ENCODE measurements at regions of chr3 and their contacts with region 1.

Region 1: GRCh38 chr3:187319699-187320302 is 28.3 kb upstream of the MASP1 start:
- DNase-seq: peak; percentile 82
- H3K4me3 Mint-ChIP-seq: no peak overlapping the region
- H3K27ac Mint-ChIP-seq: no peak overlapping the region
- H3K4me1 Mint-ChIP-seq: peaks cover 7% of the 10 kb centered on the region
- H3K27me3 Mint-ChIP-seq: peaks cover 21% of the 10 kb centered on the region

Region 2: GRCh38 chr3:187227658-187228258 is 92.0 kb before region 1 on chr3:
- CTCF ChIA-PET with region 1: interaction called, 75 read pairs
- intact Hi-C with region 1: no loop called
- DNase-seq: no peak
- H3K4me3 Mint-ChIP-seq: no peak overlapping the region
- H3K27ac Mint-ChIP-seq: no peak overlapping the region
- H3K4me1 Mint-ChIP-seq: no peaks in the 10 kb centered on the region
- H3K27me3 Mint-ChIP-seq: no peaks in the 10 kb centered on the region

Region 3: GRCh38 chr3:187507268-187507667 is 187.5 kb after region 1 on chr3:
- CTCF ChIA-PET with region 1: interaction called, 3 read pairs
- intact Hi-C with region 1: loop called (anchors 10 kb)
- DNase-seq: no peak
- H3K4me3 Mint-ChIP-seq: no peak overlapping the region
- H3K27ac Mint-ChIP-seq: no peak overlapping the region
- H3K4me1 Mint-ChIP-seq: no peaks in the 10 kb centered on the region
- H3K27me3 Mint-ChIP-seq: peaks cover 7% of the 10 kb centered on the region

Region 4: GRCh38 chr3:187669675-187670504 is 350.1 kb after region 1 on chr3 and contains the start of gene SST:
- CTCF ChIA-PET with region 1: interaction called, 283 read pairs
- intact Hi-C with region 1: no loop called
- DNase-seq: peak; percentile 67
- H3K4me3 Mint-ChIP-seq: no peak within 1 kb of the TSS
- H3K27ac Mint-ChIP-seq: no peak within 1 kb of the TSS
- H3K4me1 Mint-ChIP-seq: peaks cover 10% of the 10 kb centered on the region
- H3K27me3 Mint-ChIP-seq: peaks cover 63% of the 10 kb centered on the region
- total RNA-seq, gene SST: not detected

Region 5: GRCh38 chr3:187714404-187714979 is 394.7 kb after region 1 on chr3:
- CTCF ChIA-PET with region 1: interaction called, 31 read pairs
- intact Hi-C with region 1: loop called (anchors 1 kb)
- DNase-seq: peak; percentile 88
- H3K4me3 Mint-ChIP-seq: no peak overlapping the region
- H3K27ac Mint-ChIP-seq: no peak overlapping the region
- H3K4me1 Mint-ChIP-seq: peaks cover 9% of the 10 kb centered on the region
- H3K27me3 Mint-ChIP-seq: no peaks in the 10 kb centered on the region